CD4-positive, alpha-beta T cell (primary cell): ENCODE measurements at regions of chr10 and their contacts with region 1.

Region 1: DNA sequence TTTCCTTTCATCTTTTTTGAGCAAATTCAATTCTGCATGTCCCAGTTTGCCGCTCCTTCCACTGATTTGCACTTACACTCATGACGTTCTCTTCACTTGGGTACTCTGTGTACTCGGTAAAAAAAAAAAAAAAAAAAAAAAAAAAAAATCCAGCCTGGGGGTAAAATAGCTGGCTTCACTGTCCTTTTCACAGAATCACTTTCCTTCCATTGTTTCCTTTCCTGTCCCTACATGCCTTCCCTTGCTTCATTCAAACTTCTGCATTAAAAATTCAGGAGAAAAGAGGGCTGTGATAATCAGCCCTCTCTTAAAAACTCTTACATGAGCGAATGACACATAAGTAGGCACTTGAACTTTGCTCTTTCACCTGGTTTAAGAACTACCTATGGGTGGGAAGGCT is 8.7 kb downstream of the ANKRD1 start:
- DNase-seq: no peak
- ATAC-seq: no peak
- H3K4me3 ChIP-seq: no peak overlapping the region
- H3K4me3 Mint-ChIP-seq: no peak overlapping the region
- H3K27ac ChIP-seq: no peak overlapping the region
- H3K27ac Mint-ChIP-seq: no peak overlapping the region
- H3K4me1 ChIP-seq: peaks cover 4% of the 10 kb centered on the region
- H3K4me1 Mint-ChIP-seq: peaks cover 4% of the 10 kb centered on the region
- H3K27me3 ChIP-seq: no peaks in the 10 kb centered on the region
- H3K27me3 Mint-ChIP-seq: peaks cover 4% of the 10 kb centered on the region
- CTCF ChIP-seq: no peak

Region 2: DNA sequence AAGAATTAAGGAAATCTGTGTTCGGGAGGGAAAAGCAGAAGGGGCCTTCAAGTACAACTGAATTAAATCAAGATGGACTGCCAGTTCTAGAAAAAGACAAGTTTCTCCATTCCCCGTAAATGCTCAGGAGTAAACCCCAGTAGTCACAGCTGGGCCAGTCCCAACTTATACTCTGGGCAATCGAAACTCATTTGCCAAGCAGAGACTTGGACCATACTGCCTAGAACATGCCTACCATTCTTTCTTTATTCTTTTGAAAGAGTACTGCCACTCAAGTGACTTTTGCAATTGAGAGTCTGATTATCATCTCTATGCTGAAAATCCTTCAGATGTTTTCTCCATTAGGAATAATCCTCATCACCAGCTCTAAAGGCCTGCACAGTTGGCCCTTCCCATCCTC is 19.0 kb before region 1 on chr10:
- CTCF ChIA-PET with region 1: interaction called, 12 read pairs
- POLR2A ChIA-PET with region 1: no interaction called
- intact Hi-C with region 1: no loop called
- DNase-seq: no peak
- ATAC-seq: no peak
- H3K4me3 ChIP-seq: no peak overlapping the region
- H3K4me3 Mint-ChIP-seq: no peak overlapping the region
- H3K27ac ChIP-seq: no peak overlapping the region
- H3K27ac Mint-ChIP-seq: no peak overlapping the region
- H3K4me1 ChIP-seq: peaks cover 2% of the 10 kb centered on the region
- H3K4me1 Mint-ChIP-seq: peaks cover 40% of the 10 kb centered on the region
- H3K27me3 ChIP-seq: no peaks in the 10 kb centered on the region
- H3K27me3 Mint-ChIP-seq: no peaks in the 10 kb centered on the region
- CTCF ChIP-seq: no peak

Region 3: GRCh38 chr10:91077549-91078071 is 165.4 kb after region 1 on chr10:
- CTCF ChIA-PET with region 1: no interaction called
- POLR2A ChIA-PET with region 1: no interaction called
- intact Hi-C with region 1: loop called in 1 of 2 experiments (anchors 10 kb)
- DNase-seq: no peak
- ATAC-seq: no peak
- H3K4me3 ChIP-seq: no peak overlapping the region
- H3K4me3 Mint-ChIP-seq: no peak overlapping the region
- H3K27ac ChIP-seq: no peak overlapping the region
- H3K27ac Mint-ChIP-seq: no peak overlapping the region
- H3K4me1 ChIP-seq: no peaks in the 10 kb centered on the region
- H3K4me1 Mint-ChIP-seq: no peaks in the 10 kb centered on the region
- H3K27me3 ChIP-seq: no peaks in the 10 kb centered on the region
- H3K27me3 Mint-ChIP-seq: peaks cover 10% of the 10 kb centered on the region
- CTCF ChIP-seq: no peak

Region 4: DNA sequence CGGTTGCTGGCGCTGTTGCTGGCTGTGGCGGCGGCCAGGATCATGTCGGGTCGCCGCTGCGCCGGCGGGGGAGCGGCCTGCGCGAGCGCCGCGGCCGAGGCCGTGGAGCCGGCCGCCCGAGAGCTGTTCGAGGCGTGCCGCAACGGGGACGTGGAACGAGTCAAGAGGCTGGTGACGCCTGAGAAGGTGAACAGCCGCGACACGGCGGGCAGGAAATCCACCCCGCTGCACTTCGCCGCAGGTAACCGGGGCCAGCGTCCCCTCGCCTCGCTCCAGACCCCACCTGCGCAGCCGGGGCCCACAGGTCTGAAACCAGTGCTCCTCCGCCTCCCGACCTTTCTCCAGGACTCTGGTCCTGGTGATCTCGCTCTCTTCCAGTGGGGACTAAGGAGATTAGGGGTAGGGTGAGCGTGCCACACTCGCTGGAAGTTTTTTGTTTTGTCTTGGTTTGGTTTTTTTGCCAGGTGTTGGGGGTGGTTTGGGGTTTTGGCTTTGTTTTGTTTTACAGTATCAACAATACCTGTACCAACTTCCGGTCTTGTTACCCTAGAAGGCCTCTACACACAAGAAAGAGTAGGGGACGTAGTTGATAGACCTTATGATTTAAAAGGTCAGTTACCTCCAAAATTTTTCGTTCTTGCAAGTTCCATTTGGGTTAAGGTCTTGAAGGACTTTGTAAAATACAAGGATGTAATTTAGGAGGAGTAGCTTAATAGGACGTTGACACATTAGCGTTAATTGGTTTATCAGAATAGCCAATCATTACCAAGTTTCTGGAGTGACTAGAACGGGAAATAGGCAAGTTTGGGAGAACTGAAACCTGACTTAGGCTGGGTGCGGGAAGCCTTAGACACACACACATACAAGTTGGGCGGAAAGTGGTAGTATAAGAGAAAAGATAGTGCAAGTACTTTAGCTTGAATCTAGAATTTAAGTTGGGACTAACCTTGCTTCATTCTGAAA is 886.8 kb after region 1 on chr10:
- CTCF ChIA-PET with region 1: no interaction called
- POLR2A ChIA-PET with region 1: no interaction called
- intact Hi-C with region 1: no loop called
- DNase-seq: peak in 13 of 14 experiments; percentile 30 to 81 (median 52)
- ATAC-seq: peak; percentile 63
- H3K4me3 ChIP-seq: peak overlapping the region; percentile 93
- H3K4me3 Mint-ChIP-seq: peak overlapping the region; percentile 98
- H3K27ac ChIP-seq: peak overlapping the region; percentile 72 to 90
- H3K27ac Mint-ChIP-seq: peak overlapping the region; percentile 97
- H3K4me1 ChIP-seq: peaks cover 26% of the 10 kb centered on the region
- H3K4me1 Mint-ChIP-seq: peaks cover 77% of the 10 kb centered on the region
- H3K27me3 ChIP-seq: no peaks in the 10 kb centered on the region
- H3K27me3 Mint-ChIP-seq: no peaks in the 10 kb centered on the region
- CTCF ChIP-seq: no peak